MCF 10A (cell line): ENCODE measurements at regions of chr4 and their contacts with region 1.

Region 1: DNA sequence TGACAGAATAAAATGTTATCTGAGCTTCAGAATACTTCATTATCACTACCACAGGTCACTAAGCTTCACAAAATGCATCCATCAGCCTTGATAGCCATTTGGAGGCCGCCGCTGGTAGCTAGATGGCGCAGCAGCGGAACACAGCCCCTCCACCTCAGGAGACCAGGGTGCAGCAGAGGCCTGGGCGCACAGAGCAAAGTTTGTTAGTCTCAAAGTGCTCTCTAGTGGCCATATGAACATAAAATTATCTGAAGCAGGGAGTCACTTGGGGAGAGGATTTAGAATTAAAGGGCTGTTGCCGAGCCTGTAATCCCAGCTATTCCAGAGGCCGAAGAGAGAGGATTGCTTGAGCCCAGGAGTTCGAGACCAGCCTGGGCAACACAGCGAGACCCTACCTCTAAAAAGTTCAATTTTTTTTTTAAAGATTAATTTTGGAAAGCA is 8.1 kb upstream of the DCTD start:
- DNase-seq: peak; percentile 45
- H3K4me3 Mint-ChIP-seq: no peak overlapping the region
- H3K27ac Mint-ChIP-seq: no peak overlapping the region
- H3K4me1 Mint-ChIP-seq: no peaks in the 10 kb centered on the region
- H3K27me3 Mint-ChIP-seq: no peaks in the 10 kb centered on the region
- CTCF ChIP-seq: peak; percentile 34

Region 2: GRCh38 chr4:182169987-182170386 is 755.3 kb before region 1 on chr4:
- CTCF ChIA-PET with region 1: no interaction called
- POLR2A ChIA-PET with region 1: no interaction called
- intact Hi-C with region 1: no loop called
- DNase-seq: no peak
- H3K4me3 Mint-ChIP-seq: no peak overlapping the region
- H3K27ac Mint-ChIP-seq: no peak overlapping the region
- H3K4me1 Mint-ChIP-seq: no peaks in the 10 kb centered on the region
- H3K27me3 Mint-ChIP-seq: no peaks in the 10 kb centered on the region
- CTCF ChIP-seq: no peak

Region 3: GRCh38 chr4:182478475-182478874 is 446.8 kb before region 1 on chr4:
- CTCF ChIA-PET with region 1: no interaction called
- POLR2A ChIA-PET with region 1: no interaction called
- intact Hi-C with region 1: loop called (anchors 10 kb)
- DNase-seq: peak; percentile 50
- H3K4me3 Mint-ChIP-seq: no peak overlapping the region
- H3K27ac Mint-ChIP-seq: no peak overlapping the region
- H3K4me1 Mint-ChIP-seq: no peaks in the 10 kb centered on the region
- H3K27me3 Mint-ChIP-seq: no peaks in the 10 kb centered on the region
- CTCF ChIP-seq: peak; percentile 57

Region 4: DNA sequence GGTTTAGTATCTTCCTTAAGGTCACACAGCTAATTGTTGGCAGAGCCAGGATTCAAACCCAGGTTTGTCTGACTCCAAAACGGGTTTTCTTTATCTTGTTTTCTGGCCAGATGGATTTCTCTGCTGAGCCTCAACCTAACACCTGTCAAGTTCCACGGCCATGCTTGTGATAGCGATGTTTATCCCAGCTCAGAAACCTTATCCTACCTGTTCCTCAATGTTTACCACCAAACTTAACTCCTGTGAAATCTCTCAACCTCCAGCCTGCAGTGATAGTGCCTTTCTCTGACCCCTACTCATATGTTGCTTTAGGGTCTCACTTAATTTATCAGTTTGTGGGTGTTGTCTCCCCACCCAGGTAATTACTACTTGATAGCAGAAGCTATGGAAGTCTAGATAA is 254.1 kb before region 1 on chr4:
- CTCF ChIA-PET with region 1: no interaction called
- POLR2A ChIA-PET with region 1: no interaction called
- intact Hi-C with region 1: no loop called
- DNase-seq: no peak
- H3K4me3 Mint-ChIP-seq: no peak overlapping the region
- H3K27ac Mint-ChIP-seq: no peak overlapping the region
- H3K4me1 Mint-ChIP-seq: no peaks in the 10 kb centered on the region
- H3K27me3 Mint-ChIP-seq: no peaks in the 10 kb centered on the region
- CTCF ChIP-seq: no peak

Region 5: DNA sequence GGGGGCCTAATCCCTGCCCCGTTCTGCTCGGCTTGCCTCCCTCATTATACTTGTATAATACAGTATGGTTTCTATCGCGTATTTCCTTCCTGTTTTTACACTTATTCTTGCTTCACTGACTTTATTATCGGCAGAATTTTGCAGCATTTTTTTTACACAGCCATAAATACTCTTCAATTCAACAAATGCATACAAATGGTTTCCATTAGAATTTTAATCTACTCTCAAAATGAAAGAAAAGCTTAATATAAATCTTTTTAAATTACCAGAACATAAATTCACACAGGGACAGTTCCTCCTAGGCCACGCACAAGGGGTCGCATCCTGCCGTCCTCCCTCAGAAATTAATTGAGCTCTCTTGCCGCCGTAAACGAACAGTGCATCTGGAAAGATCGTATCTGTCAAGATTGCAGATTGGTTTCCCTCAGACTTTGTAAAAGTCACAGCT is 51.0 kb before region 1 on chr4:
- CTCF ChIA-PET with region 1: no interaction called
- POLR2A ChIA-PET with region 1: no interaction called
- intact Hi-C with region 1: no loop called
- DNase-seq: no peak
- H3K4me3 Mint-ChIP-seq: no peak overlapping the region
- H3K27ac Mint-ChIP-seq: no peak overlapping the region
- H3K4me1 Mint-ChIP-seq: no peaks in the 10 kb centered on the region
- H3K27me3 Mint-ChIP-seq: no peaks in the 10 kb centered on the region
- CTCF ChIP-seq: no peak

Region 6: GRCh38 chr4:183492791-183493221 is 567.5 kb after region 1 on chr4:
- CTCF ChIA-PET with region 1: no interaction called
- POLR2A ChIA-PET with region 1: no interaction called
- intact Hi-C with region 1: no loop called
- DNase-seq: peak; percentile 71
- H3K4me3 Mint-ChIP-seq: peak overlapping the region; percentile 3
- H3K27ac Mint-ChIP-seq: peak overlapping the region; percentile 2
- H3K4me1 Mint-ChIP-seq: peaks cover 17% of the 10 kb centered on the region
- H3K27me3 Mint-ChIP-seq: no peaks in the 10 kb centered on the region
- CTCF ChIP-seq: no peak